Heart right ventricle (tissue), 16 donors: ENCODE measurements at regions of chr11 and their contacts with region 1.

Region 1: DNA sequence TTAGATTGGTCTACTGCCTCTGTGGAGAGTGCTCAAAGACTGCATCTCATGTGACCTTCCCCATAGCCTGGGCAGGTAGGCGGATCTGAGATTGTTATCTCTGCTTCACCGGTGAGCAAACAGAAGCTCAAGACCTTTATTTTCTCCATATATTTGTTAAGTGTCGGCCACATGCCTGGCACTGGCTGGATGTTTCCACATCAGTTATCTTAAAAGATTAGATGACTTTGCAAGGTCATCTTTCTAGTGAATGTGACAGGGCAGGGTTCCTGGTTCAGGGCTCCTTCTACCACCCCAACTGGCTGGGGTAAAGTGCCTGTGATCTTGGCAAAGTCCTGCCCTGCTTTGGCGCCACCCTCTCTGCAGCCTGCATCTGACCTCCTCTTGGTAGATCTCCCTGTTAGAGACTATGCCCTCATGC is 125.0 kb downstream of the CCDC81 start:
- DNase-seq: no peak
- ATAC-seq: peak in 2 of 8 donors; percentile 17 to 55
- H3K4me3 ChIP-seq: no peak overlapping the region
- H3K27ac ChIP-seq: no peak overlapping the region
- H3K4me1 ChIP-seq: peaks cover 0 to 42% (median 13%) of the 10 kb centered on the region in 9 donors
- H3K27me3 ChIP-seq: no peaks in the 10 kb centered on the region
- CTCF ChIP-seq: no peak

Region 2: GRCh38 chr11:86408845-86409244 is 90.9 kb before region 1 on chr11:
- intact Hi-C with region 1: no loop called
- DNase-seq: no peak
- ATAC-seq: no peak
- H3K4me3 ChIP-seq: no peak overlapping the region
- H3K27ac ChIP-seq: no peak overlapping the region
- H3K4me1 ChIP-seq: no peaks in the 10 kb centered on the region
- H3K27me3 ChIP-seq: no peaks in the 10 kb centered on the region
- CTCF ChIP-seq: no peak

Region 3: GRCh38 chr11:86418917-86419316 is 80.8 kb before region 1 on chr11:
- intact Hi-C with region 1: no loop called
- DNase-seq: no peak
- ATAC-seq: no peak
- H3K4me3 ChIP-seq: no peak overlapping the region
- H3K27ac ChIP-seq: no peak overlapping the region
- H3K4me1 ChIP-seq: peaks cover 0 to 6% (median 0%) of the 10 kb centered on the region in 9 donors
- H3K27me3 ChIP-seq: no peaks in the 10 kb centered on the region
- CTCF ChIP-seq: peak in 1 of 9 donors; percentile 11

Region 4: GRCh38 chr11:86523738-86524619 is 24.2 kb after region 1 on chr11:
- intact Hi-C with region 1: no loop called
- DNase-seq: no peak
- ATAC-seq: peak in 6 of 8 donors; percentile 35 to 64 (median 50)
- H3K4me3 ChIP-seq: no peak overlapping the region
- H3K27ac ChIP-seq: peak overlapping the region in 7 of 10 donors; percentile 4 to 55 (median 27)
- H3K4me1 ChIP-seq: peaks cover 9 to 36% (median 28%) of the 10 kb centered on the region in 9 donors
- H3K27me3 ChIP-seq: no peaks in the 10 kb centered on the region
- CTCF ChIP-seq: no peak

Region 5: DNA sequence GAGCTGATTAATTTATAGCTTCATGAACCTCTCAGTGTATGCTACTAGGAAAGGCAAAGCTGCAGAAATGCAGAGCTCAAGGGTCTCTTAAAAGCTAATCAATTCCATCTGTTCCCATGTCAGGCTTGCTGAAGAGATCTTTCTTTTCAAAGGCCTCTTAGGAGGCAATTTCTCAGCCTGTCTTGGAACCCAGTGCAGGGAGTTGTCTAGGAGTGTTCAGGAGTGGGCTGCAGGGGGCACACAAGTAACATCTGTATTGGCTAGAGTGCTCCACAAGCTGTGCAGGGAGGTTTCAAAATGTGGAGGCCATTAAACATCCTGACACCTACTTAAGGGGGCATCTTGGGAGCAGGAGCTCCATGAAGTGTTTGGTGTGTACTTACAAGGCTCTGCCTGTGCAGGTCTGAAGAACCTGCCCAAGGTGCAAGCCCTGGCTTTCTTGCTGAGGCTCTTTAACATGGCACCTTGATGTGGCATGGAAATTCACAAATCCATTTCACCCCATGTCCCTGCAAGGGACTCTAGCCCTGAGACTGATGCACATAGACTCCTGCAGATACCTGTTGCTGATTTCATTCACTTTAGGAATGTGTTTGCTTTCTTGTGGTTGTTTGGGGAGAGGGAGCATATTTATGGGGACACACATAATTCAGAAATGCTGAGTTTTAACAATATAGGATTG is 38.0 kb after region 1 on chr11:
- intact Hi-C with region 1: loop called in 1 of 10 experiments (anchors 5 kb)
- DNase-seq: no peak
- ATAC-seq: peak in 1 of 8 donors; percentile 39
- H3K4me3 ChIP-seq: no peak overlapping the region
- H3K27ac ChIP-seq: no peak overlapping the region
- H3K4me1 ChIP-seq: no peaks in the 10 kb centered on the region
- H3K27me3 ChIP-seq: no peaks in the 10 kb centered on the region
- CTCF ChIP-seq: peak in 5 of 9 donors; percentile 11 to 50 (median 17)

Region 6: GRCh38 chr11:86596861-86597586 is 97.3 kb after region 1 on chr11:
- intact Hi-C with region 1: no loop called
- DNase-seq: peak in 1 of 2 donors; percentile 75
- ATAC-seq: peak; percentile 75 to 94 (median 83)
- H3K4me3 ChIP-seq: no peak overlapping the region
- H3K27ac ChIP-seq: peak overlapping the region in 8 of 10 donors; percentile 26 to 67 (median 52)
- H3K4me1 ChIP-seq: peaks cover 4 to 49% (median 30%) of the 10 kb centered on the region in 9 donors
- H3K27me3 ChIP-seq: no peaks in the 10 kb centered on the region
- CTCF ChIP-seq: no peak